Naive thymus-derived CD8-positive, alpha-beta T cell (primary cell): ENCODE measurements at regions of chr5 and their contacts with region 1.

Region 1: DNA sequence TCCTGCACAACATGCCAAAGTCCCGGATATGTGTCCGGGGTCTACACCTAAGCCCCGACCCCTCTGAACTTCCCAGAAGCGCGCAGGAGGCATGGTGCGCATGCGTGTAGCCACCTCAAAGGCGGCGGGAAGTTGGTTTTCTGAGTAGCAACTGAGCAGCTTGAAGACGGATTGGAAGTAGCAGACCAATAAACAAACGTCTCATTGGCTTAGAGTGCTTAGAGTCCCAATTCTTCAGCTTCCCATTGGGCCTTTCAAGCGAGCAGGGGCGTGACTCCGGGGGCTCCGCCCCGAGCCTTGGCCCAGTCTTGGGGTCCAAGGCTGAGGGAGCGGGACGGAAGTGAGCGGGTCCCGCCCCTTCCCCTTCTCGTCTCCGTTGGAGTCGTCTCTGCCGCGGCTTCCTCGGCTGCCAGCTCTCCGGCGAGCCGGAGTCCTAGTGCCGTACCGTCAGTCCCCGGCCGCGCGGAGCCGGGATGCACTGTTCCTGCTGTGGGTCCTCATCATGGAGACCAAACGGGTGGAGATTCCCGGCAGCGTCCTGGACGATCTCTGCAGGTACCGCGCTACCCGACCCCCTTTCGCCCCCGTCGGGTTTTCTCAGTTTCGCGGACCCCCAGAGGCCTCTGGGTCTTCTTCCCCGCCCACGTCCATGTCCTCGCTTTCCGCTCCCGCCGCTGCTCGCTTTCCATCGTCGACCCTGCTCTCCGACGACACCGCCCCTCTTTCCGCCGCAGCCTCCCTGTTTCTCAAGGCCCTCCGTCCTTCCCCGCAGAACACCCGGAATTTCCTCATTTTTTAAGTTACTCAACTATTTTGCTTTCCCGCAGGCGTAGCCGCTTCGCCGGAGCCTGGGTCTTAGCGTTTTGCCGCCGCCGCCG is at the start of gene DCP2:
- DNase-seq: peak; percentile 84 to 97 (median 96)
- ATAC-seq: peak; percentile 93 to 94
- H3K4me3 Mint-ChIP-seq: peak within 1 kb of the TSS; percentile 96 to 100 (median 100)
- H3K27ac Mint-ChIP-seq: peak within 1 kb of the TSS; percentile 90 to 98 (median 97)
- H3K4me1 Mint-ChIP-seq: peaks cover 13 to 51% (median 46%) of the 10 kb centered on the region in 4 donors
- H3K27me3 Mint-ChIP-seq: no peaks in the 10 kb centered on the region
- polyA plus RNA-seq, gene DCP2: 48.3 to 53.0 (median 50.7) TPM

Region 2: GRCh38 chr5:112707187-112708102 is 269.2 kb before region 1 on chr5:
- POLR2A ChIA-PET with region 1: interaction called, 13 read pairs
- DNase-seq: peak; percentile 86 to 99 (median 98)
- ATAC-seq: peak; percentile 90 to 91
- H3K4me3 Mint-ChIP-seq: peak overlapping the region; percentile 92 to 96 (median 94)
- H3K27ac Mint-ChIP-seq: peak overlapping the region; percentile 89 to 97 (median 94)
- H3K4me1 Mint-ChIP-seq: peaks cover 21 to 60% (median 58%) of the 10 kb centered on the region in 4 donors
- H3K27me3 Mint-ChIP-seq: peaks cover 0 to 7% (median 0%) of the 10 kb centered on the region in 5 donors

Region 3: GRCh38 chr5:112860929-112861637 is 115.6 kb before region 1 on chr5 and contains the start of gene SRP19:
- POLR2A ChIA-PET with region 1: interaction called, 16 read pairs
- DNase-seq: peak; percentile 83 to 94 (median 90)
- ATAC-seq: peak; percentile 94
- H3K4me3 Mint-ChIP-seq: peak within 1 kb of the TSS; percentile 91 to 98 (median 96)
- H3K27ac Mint-ChIP-seq: peak within 1 kb of the TSS; percentile 96 to 99 (median 98)
- H3K4me1 Mint-ChIP-seq: peaks cover 14 to 40% (median 28%) of the 10 kb centered on the region in 4 donors
- H3K27me3 Mint-ChIP-seq: peaks cover 0 to 12% (median 7%) of the 10 kb centered on the region in 5 donors
- polyA plus RNA-seq, gene SRP19: 84.4 to 133 (median 97.8) TPM